Adrenal gland (tissue), 19 donors: ENCODE measurements at regions of chr4 and their contacts with region 1.

Region 1: GRCh38 chr4:47383829-47384427 is 79.6 kb downstream of the COMMD8 start:
- DNase-seq: no peak
- H3K4me3 ChIP-seq: no peak overlapping the region
- H3K27ac ChIP-seq: no peak overlapping the region
- H3K4me1 ChIP-seq: peaks cover 0 to 5% of the 10 kb centered on the region in 2 donors
- H3K27me3 ChIP-seq: no peaks in the 10 kb centered on the region
- CTCF ChIP-seq: peak; percentile 41 to 67 (median 55)
- POLR2A ChIP-seq: no peak

Region 2: GRCh38 chr4:46844325-46844917 is 539.5 kb before region 1 on chr4:
- intact Hi-C with region 1: loop called in 1 of 2 experiments (anchors 10 kb)
- DNase-seq: peak in 6 of 7 donors; percentile 16 to 54 (median 31)
- H3K4me3 ChIP-seq: no peak overlapping the region
- H3K27ac ChIP-seq: no peak overlapping the region
- H3K4me1 ChIP-seq: no peaks in the 10 kb centered on the region
- H3K27me3 ChIP-seq: no peaks in the 10 kb centered on the region
- CTCF ChIP-seq: peak; percentile 23 to 63 (median 51)
- POLR2A ChIP-seq: no peak

Region 3: GRCh38 chr4:47002593-47002992 is 381.3 kb before region 1 on chr4:
- intact Hi-C with region 1: no loop called
- DNase-seq: no peak
- H3K4me3 ChIP-seq: no peak overlapping the region
- H3K27ac ChIP-seq: no peak overlapping the region
- H3K4me1 ChIP-seq: no peaks in the 10 kb centered on the region
- H3K27me3 ChIP-seq: no peaks in the 10 kb centered on the region
- CTCF ChIP-seq: no peak
- POLR2A ChIP-seq: no peak